IMR-90 (cell line): ENCODE measurements at regions of chr1 and their contacts with region 1.

Region 1: DNA sequence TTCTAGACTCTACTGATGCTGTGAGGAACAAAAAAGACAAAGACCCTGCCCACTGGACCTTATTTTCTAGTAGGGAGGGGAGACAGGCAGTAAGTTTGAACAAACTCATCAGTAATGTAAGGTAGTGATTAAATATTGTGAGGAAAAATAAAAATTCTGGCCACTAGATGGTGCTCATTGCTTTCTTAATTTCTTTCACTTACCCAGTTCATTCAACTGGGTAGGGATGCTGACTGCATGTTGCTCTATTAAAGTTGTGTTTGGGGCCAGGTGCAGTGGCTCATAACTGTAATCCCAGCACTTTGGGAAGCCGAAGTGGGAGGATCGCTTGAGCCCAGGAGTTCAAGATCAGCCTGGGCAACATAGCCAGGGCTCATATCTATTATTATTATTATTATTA is 6.3 kb upstream of the KYAT3 start:
- DNase-seq: peak; percentile 69
- ATAC-seq: peak; percentile 88
- H3K4me3 ChIP-seq: no peak overlapping the region
- H3K27ac ChIP-seq: no peak overlapping the region
- H3K4me1 ChIP-seq: peaks cover 2% of the 10 kb centered on the region; the same call in 1 of the 2 replicates
- H3K27me3 ChIP-seq: no peaks in the 10 kb centered on the region
- CTCF ChIP-seq: peak; percentile 63
- POLR2A ChIP-seq: no peak
- RAD21 ChIP-seq: peak; percentile 70

Region 2: DNA sequence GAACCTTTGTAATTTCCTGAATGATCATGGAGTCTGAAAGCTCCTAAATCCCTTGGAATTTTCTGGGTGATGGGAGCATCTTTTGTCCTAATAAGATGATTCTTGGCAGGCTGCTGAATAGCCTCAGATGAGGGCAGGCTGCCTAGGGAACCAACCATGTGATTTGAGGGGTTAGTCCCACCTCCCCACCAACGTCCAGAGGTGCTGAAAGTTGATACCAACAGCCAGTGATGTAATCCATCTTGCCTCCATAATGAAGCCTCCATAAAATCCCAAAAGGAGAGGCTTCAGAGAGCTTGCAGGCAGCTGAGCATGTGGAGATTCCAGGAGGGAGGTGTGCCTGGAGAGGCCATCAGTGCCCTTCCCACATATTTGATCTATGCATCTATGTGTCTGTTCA is 151.1 kb before region 1 on chr1:
- CTCF ChIA-PET with region 1: no interaction called
- POLR2A ChIA-PET with region 1: no interaction called
- dilution Hi-C with region 1: no loop called
- in situ Hi-C with region 1: no loop called
- intact Hi-C with region 1: no loop called
- DNase-seq: no peak
- ATAC-seq: no peak
- H3K4me3 ChIP-seq: no peak overlapping the region
- H3K27ac ChIP-seq: no peak overlapping the region
- H3K4me1 ChIP-seq: no peaks in the 10 kb centered on the region
- H3K27me3 ChIP-seq: no peaks in the 10 kb centered on the region
- CTCF ChIP-seq: no peak
- POLR2A ChIP-seq: no peak
- RAD21 ChIP-seq: no peak

Region 3: DNA sequence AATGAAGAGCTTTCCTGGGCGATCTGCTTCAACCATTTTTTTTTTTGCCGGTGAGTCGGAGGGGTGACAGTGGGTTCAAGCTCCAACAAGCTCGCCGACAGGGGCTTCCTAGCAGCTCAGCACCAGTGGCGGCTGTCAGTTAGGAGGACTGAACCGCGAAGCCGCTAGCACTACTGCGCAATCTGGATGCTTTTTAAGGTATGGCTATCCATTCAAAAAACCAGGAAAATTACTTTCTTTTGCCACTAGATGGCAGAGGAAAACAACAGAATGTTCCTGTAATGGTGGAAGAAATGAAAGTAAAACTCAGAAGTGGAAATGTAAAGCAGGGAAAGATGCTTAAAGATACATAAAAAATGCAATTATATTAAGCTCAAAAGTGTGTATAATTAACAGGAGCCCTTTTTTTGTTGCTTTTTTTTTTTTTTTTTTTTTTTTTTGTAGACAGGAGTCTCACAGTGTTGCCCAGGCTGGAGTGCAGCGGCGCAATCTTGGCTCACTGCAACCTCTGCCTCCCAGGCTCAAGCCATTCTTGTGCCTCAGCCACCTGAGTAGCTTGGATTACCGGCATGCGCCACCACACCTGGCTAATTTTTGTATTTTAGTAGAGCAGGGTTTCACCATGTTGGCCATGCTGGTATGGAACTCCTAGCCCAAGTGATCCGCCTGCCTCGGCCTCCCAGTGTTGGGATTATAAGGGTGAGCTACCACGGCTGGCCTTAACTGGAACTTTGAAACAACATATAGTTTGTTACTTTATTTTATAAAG is 14.7 kb before region 1 on chr1:
- CTCF ChIA-PET with region 1: interaction called, 10 read pairs
- POLR2A ChIA-PET with region 1: no interaction called
- dilution Hi-C with region 1: no loop called
- in situ Hi-C with region 1: no loop called
- intact Hi-C with region 1: no loop called
- DNase-seq: peak; percentile 69
- ATAC-seq: peak; percentile 44
- H3K4me3 ChIP-seq: no peak overlapping the region
- H3K27ac ChIP-seq: peak overlapping the region; percentile 62; the same call in 1 of the 2 replicates
- H3K4me1 ChIP-seq: peaks cover 13% of the 10 kb centered on the region
- H3K27me3 ChIP-seq: no peaks in the 10 kb centered on the region
- CTCF ChIP-seq: peak; percentile 72
- POLR2A ChIP-seq: no peak
- RAD21 ChIP-seq: peak; percentile 51

Region 4: GRCh38 chr1:89065079-89065868 is 66.6 kb after region 1 on chr1 and contains the start of gene GBP1:
- CTCF ChIA-PET with region 1: no interaction called
- POLR2A ChIA-PET with region 1: no interaction called
- dilution Hi-C with region 1: no loop called
- in situ Hi-C with region 1: no loop called
- intact Hi-C with region 1: loop called (anchors 2 kb)
- DNase-seq: peak; percentile 88
- ATAC-seq: peak; percentile 79
- H3K4me3 ChIP-seq: peak within 1 kb of the TSS; percentile 98
- H3K27ac ChIP-seq: peak within 1 kb of the TSS; percentile 100
- H3K4me1 ChIP-seq: peaks cover 5% of the 10 kb centered on the region
- H3K27me3 ChIP-seq: no peaks in the 10 kb centered on the region
- CTCF ChIP-seq: no peak
- POLR2A ChIP-seq: peak; percentile 40; the same call in 1 of the 2 replicates
- RAD21 ChIP-seq: no peak
- total RNA-seq, gene GBP1: 108 and 118 TPM in 2 replicates

Region 5: DNA sequence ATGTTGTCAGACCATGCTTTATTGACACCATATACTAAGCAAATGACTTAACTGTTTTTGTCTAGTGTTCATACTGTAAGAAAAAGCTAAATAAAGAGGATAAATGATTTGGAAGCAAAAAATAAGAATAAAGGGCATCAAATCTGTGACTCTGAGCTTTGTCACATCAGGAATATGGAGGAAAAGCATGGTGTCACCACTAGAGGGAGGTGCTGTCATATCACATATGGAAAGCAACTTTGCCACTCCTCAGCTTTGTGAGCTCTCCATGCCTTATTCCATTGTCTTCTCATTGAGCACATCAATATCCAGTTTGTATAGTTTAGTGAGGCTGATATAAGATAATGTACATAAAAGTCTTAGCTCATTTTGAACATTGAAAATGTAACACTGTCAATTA is 87.1 kb after region 1 on chr1:
- CTCF ChIA-PET with region 1: interaction called, 5 read pairs
- POLR2A ChIA-PET with region 1: no interaction called
- dilution Hi-C with region 1: no loop called
- in situ Hi-C with region 1: no loop called
- intact Hi-C with region 1: loop called (anchors 5 kb)
- DNase-seq: peak; percentile 56
- ATAC-seq: peak; percentile 91
- H3K4me3 ChIP-seq: no peak overlapping the region
- H3K27ac ChIP-seq: no peak overlapping the region
- H3K4me1 ChIP-seq: no peaks in the 10 kb centered on the region
- H3K27me3 ChIP-seq: no peaks in the 10 kb centered on the region
- CTCF ChIP-seq: peak; percentile 72
- POLR2A ChIP-seq: no peak
- RAD21 ChIP-seq: peak; percentile 69

Region 6: DNA sequence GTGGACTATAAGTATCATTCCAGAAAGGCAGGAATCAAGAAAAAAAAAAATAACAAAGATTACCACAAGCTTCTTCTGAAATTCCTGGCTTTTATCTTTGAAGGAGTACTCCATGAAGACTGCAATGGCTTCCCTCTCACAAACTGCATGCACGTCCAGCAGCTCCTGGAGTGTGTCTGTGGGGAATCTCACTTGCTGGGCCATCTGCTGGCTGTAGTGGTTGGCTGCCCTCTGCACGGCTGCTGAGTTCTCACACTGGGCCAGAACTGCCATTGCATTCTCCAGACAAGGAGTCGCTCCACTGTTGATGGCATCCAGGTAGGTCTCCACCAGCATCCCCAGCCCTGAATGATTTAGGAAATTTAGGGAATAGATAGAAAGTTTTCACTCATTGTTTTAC is 150.5 kb after region 1 on chr1:
- CTCF ChIA-PET with region 1: no interaction called
- POLR2A ChIA-PET with region 1: no interaction called
- dilution Hi-C with region 1: no loop called
- in situ Hi-C with region 1: no loop called
- intact Hi-C with region 1: loop called (anchors 1 kb)
- DNase-seq: peak; percentile 43
- ATAC-seq: peak; percentile 88
- H3K4me3 ChIP-seq: no peak overlapping the region
- H3K27ac ChIP-seq: no peak overlapping the region
- H3K4me1 ChIP-seq: no peaks in the 10 kb centered on the region
- H3K27me3 ChIP-seq: no peaks in the 10 kb centered on the region
- CTCF ChIP-seq: peak; percentile 41
- POLR2A ChIP-seq: no peak
- RAD21 ChIP-seq: peak; percentile 42

Region 7: DNA sequence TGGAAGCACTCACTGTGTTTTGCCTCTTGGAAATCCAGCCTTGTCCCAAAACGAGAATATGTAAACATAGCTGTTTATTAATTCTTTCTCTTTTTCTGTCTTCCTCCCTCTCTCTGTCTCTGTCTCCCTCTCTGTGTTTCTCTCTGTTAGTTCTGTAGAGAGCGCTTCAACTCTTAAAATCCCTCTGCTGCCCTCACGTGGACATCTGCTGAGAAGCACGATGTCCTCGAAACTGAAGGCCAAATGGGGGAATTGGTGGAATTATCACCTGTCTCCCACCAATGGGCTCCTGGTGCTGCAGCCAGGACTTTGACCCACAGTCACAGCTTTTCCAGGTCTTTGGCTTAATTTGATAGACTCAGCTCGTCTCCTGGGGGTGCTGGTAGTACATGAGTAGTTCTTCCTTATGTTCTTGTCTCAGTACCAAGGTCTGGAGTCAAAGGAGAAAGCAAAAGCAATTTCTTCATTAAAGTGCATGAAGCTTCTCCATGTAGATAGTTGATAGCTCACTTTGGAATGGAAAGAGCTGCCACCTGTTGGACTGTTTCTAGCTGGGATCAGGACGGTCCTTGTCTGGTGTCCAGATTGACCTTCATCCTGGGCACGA is 359.7 kb after region 1 on chr1:
- CTCF ChIA-PET with region 1: interaction called, 4 read pairs
- POLR2A ChIA-PET with region 1: no interaction called
- dilution Hi-C with region 1: no loop called
- in situ Hi-C with region 1: loop called (anchors 5 kb)
- intact Hi-C with region 1: loop called (anchors 1 kb)
- DNase-seq: peak; percentile 65
- ATAC-seq: peak; percentile 96
- H3K4me3 ChIP-seq: no peak overlapping the region
- H3K27ac ChIP-seq: no peak overlapping the region
- H3K4me1 ChIP-seq: no peaks in the 10 kb centered on the region
- H3K27me3 ChIP-seq: peaks cover 2% of the 10 kb centered on the region; the same call in 1 of the 2 replicates
- CTCF ChIP-seq: peak; percentile 78
- POLR2A ChIP-seq: no peak
- RAD21 ChIP-seq: peak; percentile 74